ENCODE measurements at regions of chr12 and their contacts with region 1.

Region 1: DNA sequence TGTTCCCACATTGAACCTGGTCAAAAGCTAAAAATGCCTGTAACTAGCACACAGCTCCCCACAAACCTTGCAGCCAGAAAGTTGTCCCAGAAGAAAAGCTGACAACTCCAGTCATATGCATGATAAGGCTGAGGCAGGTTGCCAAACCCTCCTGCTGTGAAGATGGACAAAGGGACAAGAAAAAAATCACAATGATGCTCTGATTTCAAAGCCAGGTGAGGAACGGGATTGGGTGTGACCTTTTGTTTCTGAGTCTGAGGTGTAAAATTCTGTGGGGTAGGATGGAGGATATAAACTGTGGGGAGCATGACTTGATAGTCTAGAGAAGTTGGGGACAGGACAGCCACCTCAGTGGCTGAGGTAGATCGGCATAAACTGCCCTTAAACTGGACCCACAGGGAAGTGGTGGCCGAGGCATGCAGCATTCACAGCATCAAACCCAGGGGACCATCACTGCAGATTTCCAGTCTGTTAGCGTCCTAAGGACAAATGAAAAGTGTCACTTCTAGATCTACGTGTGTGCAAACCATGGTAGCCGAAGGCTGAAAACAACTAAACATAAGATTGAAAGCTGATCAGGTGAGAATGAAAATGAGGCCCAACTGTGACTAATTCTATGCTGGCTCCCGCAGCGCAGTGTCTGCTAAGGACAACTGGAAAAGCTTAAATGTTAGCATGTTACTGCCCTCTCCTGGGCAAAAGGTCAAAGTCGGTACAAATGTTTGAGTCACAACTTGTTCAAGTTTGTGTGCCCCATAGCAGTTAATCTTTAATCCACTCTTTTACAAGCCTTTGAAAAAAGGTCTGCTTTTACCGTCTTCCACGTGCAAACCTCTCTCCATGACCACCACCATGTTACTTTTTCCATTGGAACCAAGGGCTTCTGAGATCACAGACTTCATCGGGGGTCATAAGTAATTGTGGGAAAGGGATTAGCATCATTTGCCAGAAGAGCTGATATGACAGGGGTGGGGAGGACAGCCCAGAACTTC is 39.8 kb downstream of the GRIN2B start:
- DNase-seq: peak in 1 of 2 donors; percentile 19
- ATAC-seq: peak in 4 of 8 donors; percentile 46 to 82 (median 58)
- H3K4me3 ChIP-seq: no peak overlapping the region
- H3K27ac ChIP-seq: no peak overlapping the region
- H3K4me1 ChIP-seq: no peaks in the 10 kb centered on the region
- H3K27me3 ChIP-seq: peaks cover 0 to 4% (median 0%) of the 10 kb centered on the region in 7 donors
- CTCF ChIP-seq: peak in 7 of 9 donors; percentile 39 to 57 (median 49)

Region 2: DNA sequence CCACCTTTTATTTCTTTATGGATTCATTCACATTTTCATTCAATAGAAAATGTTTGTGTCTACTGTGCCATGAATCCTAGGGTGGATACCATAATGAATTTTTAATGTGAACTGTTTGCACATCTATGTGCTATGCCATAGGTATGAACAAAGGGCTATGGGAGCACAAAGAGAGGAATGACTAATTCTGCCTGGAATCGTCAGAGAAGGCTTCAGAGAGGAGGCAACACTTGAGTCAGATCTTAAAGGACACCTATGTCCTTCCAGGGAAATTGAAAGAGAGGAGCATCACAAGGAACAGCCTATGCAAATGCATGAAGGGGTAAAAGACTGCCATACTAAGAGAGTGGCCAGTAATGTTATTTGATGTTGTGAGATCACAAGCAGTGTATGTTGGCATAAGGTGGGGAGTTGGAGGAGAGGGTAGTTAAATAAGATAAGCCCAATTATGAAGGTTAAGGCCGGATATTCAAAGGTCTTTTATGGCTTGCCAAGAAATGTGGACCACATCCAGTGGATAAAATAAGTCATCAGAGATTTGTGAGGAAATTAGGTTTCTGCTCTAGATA is 206.9 kb before region 1 on chr12:
- intact Hi-C with region 1: loop called in 4 of 10 experiments (anchors 1 to 5 kb)
- DNase-seq: no peak
- ATAC-seq: no peak
- H3K4me3 ChIP-seq: no peak overlapping the region
- H3K27ac ChIP-seq: no peak overlapping the region
- H3K4me1 ChIP-seq: no peaks in the 10 kb centered on the region
- H3K27me3 ChIP-seq: peaks cover 0 to 4% (median 0%) of the 10 kb centered on the region in 7 donors
- CTCF ChIP-seq: no peak

Region 3: DNA sequence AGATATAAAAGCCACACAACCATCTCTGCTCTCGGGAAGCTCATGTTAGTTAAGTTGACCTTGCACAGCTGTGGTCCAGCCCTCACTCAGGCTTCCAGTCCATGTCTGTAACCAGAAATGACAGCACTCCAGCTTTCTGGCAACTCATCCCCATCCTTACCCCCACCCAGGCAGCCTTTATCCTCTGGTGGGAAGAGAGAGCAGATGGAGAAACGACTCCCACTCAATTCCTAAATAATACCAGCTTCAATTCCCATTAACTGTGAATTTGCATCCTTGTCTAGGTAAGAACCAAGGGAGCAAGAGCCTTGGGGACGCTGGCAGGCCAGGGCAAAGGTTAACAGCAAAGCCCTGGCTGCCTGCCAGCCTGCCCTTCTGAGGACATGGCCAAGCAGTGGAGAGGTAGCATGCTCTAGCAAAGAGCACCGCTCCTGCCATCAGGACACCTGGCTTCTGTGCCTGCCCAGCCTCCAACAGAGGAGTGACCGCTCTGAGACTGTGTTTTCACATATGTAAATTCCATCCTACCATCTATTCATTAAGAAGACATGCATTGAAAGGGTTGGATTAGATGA is 196.4 kb before region 1 on chr12:
- intact Hi-C with region 1: loop called in 4 of 10 experiments (anchors 5 to 10 kb)
- DNase-seq: peak in 1 of 2 donors; percentile 9
- ATAC-seq: no peak
- H3K4me3 ChIP-seq: no peak overlapping the region
- H3K27ac ChIP-seq: no peak overlapping the region
- H3K4me1 ChIP-seq: no peaks in the 10 kb centered on the region
- H3K27me3 ChIP-seq: peaks cover 0 to 42% (median 20%) of the 10 kb centered on the region in 7 donors
- CTCF ChIP-seq: no peak

Region 4: DNA sequence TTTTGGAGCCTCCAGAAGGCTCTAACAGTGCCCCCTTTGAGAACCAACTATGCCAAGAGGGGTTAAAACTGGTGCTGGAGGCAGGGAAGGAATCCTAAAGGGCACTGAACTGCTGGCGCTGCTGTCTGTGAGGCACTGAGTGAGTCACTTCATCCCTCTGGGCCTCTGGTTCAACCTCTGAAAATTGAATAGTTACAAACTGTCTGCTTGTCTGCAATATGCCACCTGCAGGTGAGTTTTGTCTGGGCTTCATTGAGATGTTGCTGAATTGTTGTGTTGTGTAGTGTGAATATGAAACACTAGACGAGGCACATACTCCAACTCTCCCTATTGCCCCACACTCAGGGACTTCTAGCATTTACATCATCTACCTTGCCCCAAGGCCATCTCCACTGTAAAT is 28.2 kb before region 1 on chr12:
- intact Hi-C with region 1: no loop called
- DNase-seq: no peak
- ATAC-seq: no peak
- H3K4me3 ChIP-seq: no peak overlapping the region
- H3K27ac ChIP-seq: no peak overlapping the region
- H3K4me1 ChIP-seq: no peaks in the 10 kb centered on the region
- H3K27me3 ChIP-seq: no peaks in the 10 kb centered on the region
- CTCF ChIP-seq: no peak

Measured in heart right ventricle (tissue), 16 donors.